Activated CD4-positive, alpha-beta T cell treated with anti-CD3 and anti-CD28 coated beads for 36 hours (primary cell): ENCODE measurements at regions of chr15 and their contacts with region 1.

Region 1: GRCh38 chr15:63212050-63213004 is 22.9 kb downstream of the RAB8B start:
- DNase-seq: peak; percentile 44
- ATAC-seq: peak; percentile 70
- H3K4me3 Mint-ChIP-seq: peak overlapping the region; percentile 53
- H3K27ac Mint-ChIP-seq: peak overlapping the region; percentile 98
- H3K4me1 Mint-ChIP-seq: peaks cover 91% of the 10 kb centered on the region
- H3K27me3 Mint-ChIP-seq: no peaks in the 10 kb centered on the region

Region 2: GRCh38 chr15:62976301-62976881 is 235.9 kb before region 1 on chr15:
- CTCF ChIA-PET with region 1: no interaction called
- POLR2A ChIA-PET with region 1: no interaction called
- intact Hi-C with region 1: no loop called
- DNase-seq: no peak
- ATAC-seq: no peak
- H3K4me3 Mint-ChIP-seq: no peak overlapping the region
- H3K27ac Mint-ChIP-seq: no peak overlapping the region
- H3K4me1 Mint-ChIP-seq: no peaks in the 10 kb centered on the region
- H3K27me3 Mint-ChIP-seq: peaks cover 2% of the 10 kb centered on the region

Region 3: DNA sequence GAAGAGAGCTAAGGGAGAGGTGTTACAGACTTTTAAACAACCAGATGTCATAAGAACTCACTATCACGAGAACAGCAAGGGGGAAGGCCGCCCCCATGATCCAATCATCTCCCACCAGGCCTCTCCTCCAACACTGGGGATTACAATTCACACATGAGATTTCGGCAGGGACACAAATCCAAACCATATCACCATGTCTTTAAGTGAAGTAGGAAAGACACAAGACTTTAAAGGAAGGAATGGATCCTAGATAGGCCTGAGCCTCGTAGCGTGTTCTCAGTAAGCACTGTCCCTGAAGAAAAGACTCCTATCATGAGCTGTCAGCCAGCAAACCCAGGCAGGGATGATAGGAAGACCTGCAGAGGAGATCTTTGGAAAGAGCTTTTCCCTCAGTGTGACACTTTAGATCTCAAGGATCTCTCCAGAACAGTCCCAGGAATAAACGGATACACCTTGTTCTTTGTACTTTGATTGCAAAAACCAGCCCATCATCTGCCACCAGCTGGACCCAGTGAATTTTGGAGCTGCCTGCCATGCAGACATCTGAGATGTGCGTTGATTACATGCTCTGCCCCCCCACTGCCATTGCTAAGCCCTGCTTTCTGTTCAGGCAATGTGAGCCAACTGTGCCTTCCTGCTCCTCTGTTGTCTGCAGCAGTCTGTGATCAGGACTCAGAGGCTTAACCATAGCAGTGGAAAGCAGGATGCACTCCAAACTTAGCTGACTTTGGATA is 39.8 kb before region 1 on chr15:
- CTCF ChIA-PET with region 1: interaction called, 3 read pairs
- POLR2A ChIA-PET with region 1: interaction called, 8 read pairs
- intact Hi-C with region 1: loop called (anchors 1 kb)
- DNase-seq: no peak
- ATAC-seq: no peak
- H3K4me3 Mint-ChIP-seq: no peak overlapping the region
- H3K27ac Mint-ChIP-seq: peak overlapping the region; percentile 16
- H3K4me1 Mint-ChIP-seq: peaks cover 14% of the 10 kb centered on the region
- H3K27me3 Mint-ChIP-seq: no peaks in the 10 kb centered on the region

Region 4: GRCh38 chr15:63277038-63277892 is 64.9 kb after region 1 on chr15 and contains the start of gene APH1B:
- CTCF ChIA-PET with region 1: no interaction called
- POLR2A ChIA-PET with region 1: interaction called, 17 read pairs
- intact Hi-C with region 1: no loop called
- DNase-seq: peak; percentile 80
- ATAC-seq: peak; percentile 83
- H3K4me3 Mint-ChIP-seq: peak within 1 kb of the TSS; percentile 78
- H3K27ac Mint-ChIP-seq: peak within 1 kb of the TSS; percentile 88
- H3K4me1 Mint-ChIP-seq: peaks cover 29% of the 10 kb centered on the region
- H3K27me3 Mint-ChIP-seq: no peaks in the 10 kb centered on the region
- total RNA-seq, gene APH1B: 6.5 to 7.8 TPM

Region 5: DNA sequence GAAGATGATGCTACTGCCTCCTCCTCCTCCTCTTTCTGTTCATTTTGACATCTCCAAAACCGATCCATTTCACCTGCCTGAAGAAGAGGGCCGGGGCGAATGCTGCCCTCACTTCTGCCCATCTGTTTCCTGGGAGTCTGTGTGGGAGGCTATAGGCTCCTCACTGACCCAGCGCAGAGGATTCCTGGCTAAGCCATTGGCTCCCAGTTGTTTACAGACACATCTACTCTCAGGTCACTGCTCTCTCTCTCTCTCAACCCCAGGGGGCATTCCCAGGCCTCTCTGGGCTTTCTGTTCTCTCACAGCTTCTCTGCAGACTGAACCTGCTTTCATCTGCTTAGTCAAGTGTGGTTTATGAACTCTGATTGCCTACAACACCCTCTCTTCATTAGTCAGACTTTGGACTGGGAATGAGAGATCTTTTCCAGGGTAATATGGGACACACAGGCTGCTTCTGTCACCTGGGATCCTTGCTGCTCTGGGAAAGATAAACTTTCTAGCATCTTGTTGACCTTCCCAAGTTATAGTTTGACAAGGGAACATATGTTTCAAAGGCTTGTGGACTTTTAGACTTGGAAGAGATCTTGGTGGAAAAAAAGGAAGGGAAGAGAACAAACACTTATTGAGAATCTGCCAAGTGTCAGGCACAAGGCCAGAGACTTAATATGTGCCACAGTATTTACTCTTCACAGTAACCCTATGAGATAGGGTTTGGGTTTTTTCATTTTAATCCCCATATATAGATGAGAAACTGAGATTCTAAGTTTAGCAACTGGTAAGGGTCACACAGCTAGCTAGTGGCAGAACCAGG is 261.9 kb after region 1 on chr15:
- CTCF ChIA-PET with region 1: no interaction called
- POLR2A ChIA-PET with region 1: interaction called, 3 read pairs
- intact Hi-C with region 1: loop called in 1 of 2 experiments (anchors 5 kb)
- DNase-seq: peak; percentile 84
- ATAC-seq: peak; percentile 79
- H3K4me3 Mint-ChIP-seq: peak overlapping the region; percentile 9
- H3K27ac Mint-ChIP-seq: peak overlapping the region; percentile 94
- H3K4me1 Mint-ChIP-seq: peaks cover 59% of the 10 kb centered on the region
- H3K27me3 Mint-ChIP-seq: no peaks in the 10 kb centered on the region